Left cardiac atrium (tissue), 4 donors: ENCODE measurements at regions of chr2 and their contacts with region 1.

Region 1: GRCh38 chr2:165401285-165401852 is 68.1 kb upstream of the CSRNP3 start:
- DNase-seq: no peak
- ATAC-seq: no peak

Region 2: DNA sequence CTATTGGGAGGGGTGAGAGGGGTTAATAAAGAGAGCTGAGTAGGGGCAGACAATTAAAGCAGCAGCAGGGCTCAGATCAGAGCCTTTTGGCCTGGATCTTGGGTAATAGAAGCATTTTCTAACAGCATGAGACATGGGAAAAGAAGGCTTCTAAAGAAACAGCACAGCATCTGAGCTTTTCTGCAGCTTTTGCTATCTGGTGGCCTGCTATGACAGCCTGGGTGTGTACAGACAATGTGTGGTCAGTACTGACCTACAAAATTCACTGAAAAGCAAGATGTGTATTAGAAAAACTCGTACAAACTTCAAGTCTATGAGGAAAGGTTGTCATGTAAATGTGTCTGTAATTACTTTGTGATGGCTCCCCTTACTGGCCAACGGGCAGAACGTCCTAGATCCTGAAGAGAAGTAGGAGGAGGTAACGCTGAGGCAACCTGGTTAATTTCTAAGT is 297.1 kb after region 1 on chr2:
- intact Hi-C with region 1: loop called (anchors 1 to 5 kb)
- DNase-seq: peak; percentile 28
- ATAC-seq: peak; percentile 68 to 70

Region 3: DNA sequence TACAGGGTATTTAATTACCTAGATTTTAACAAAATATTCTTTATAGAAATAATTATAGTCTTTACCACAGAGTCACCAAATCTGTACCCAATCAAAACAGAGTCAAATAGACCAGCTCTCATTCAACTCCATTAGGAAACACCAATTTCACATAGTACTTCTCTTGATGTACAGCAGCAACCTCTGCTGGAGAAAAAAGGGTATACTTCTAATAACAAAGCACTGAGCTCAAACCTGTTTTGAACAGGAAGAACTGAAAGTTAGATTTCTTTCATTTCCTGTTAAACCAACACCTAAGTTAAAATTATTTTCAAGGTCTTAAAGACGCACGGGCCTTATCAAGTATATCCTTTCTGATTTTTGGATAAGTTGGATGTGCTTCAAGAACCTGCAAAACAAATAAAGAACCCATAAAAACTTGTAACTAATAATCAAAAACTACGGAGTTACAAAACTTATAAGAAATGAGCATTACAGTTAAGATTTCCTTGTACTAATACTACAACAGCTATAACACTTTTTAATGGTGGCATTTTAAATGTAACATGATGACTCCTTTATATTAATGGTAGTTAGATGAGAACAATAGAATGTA is 473.2 kb after region 1 on chr2:
- intact Hi-C with region 1: loop called in 1 of 2 experiments (anchors 2 kb)
- DNase-seq: no peak
- ATAC-seq: peak; percentile 71 to 72

Region 4: GRCh38 chr2:165889158-165889557 is 487.8 kb after region 1 on chr2:
- intact Hi-C with region 1: loop called in 1 of 2 experiments (anchors 10 kb)
- DNase-seq: no peak
- ATAC-seq: peak in 1 of 2 donors; percentile 35